ENCODE measurements at regions of chr4 and their contacts with region 1.

Region 1: DNA sequence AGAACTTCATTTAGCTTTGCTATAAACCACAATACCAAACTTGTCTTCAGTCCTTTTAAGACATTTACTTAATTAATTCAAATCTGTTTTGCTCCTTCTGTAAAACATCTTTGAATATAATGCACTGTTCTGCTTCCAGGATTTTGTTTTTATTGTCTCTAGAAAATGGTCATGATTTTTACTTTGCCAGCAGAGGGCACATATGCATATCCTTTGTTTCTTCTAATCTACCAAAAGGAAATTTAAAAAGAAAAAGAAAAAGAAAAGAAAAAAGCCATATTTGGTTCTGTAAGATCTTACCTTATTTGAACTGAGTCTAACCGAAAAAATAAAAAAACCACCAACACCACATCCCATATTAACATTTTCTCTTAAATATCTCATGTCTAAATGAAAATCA is 101.9 kb upstream of the CCSER1 start:
- DNase-seq: no peak
- ATAC-seq: no peak
- H3K4me3 ChIP-seq: no peak overlapping the region
- H3K27ac ChIP-seq: no peak overlapping the region
- H3K4me1 ChIP-seq: peaks cover 9% of the 10 kb centered on the region
- H3K27me3 ChIP-seq: no peaks in the 10 kb centered on the region
- CTCF ChIP-seq: peak in 2 of 3 experiments; percentile 19 to 20; a peak in 3 of 6 replicates
- EP300 ChIP-seq: no peak
- POLR2A ChIP-seq: no peak
- RAD21 ChIP-seq: peak; percentile 46

Region 2: GRCh38 chr4:89929425-89930159 is 95.7 kb before region 1 on chr4:
- CTCF ChIA-PET with region 1: interaction called, 3 read pairs
- POLR2A ChIA-PET with region 1: no interaction called
- RAD21 ChIA-PET with region 1: interaction called, 3 read pairs
- SMC1A ChIA-PET with region 1: interaction called, 5 read pairs
- in situ Hi-C with region 1: no loop called
- intact Hi-C with region 1: loop called (anchors 5 kb)
- DNase-seq: peak; percentile 41
- ATAC-seq: peak; percentile 92
- H3K4me3 ChIP-seq: no peak overlapping the region
- H3K27ac ChIP-seq: no peak overlapping the region
- H3K4me1 ChIP-seq: 0 out of 2 replicates have a peak, but pooled peaks cover 3% of the 10 kb centered on the region
- H3K27me3 ChIP-seq: no peaks in the 10 kb centered on the region
- CTCF ChIP-seq: no peak
- EP300 ChIP-seq: peak in 1 of 2 experiments; percentile 50; a peak in 2 of 4 replicates
- POLR2A ChIP-seq: no peak
- RAD21 ChIP-seq: no peak

Region 3: GRCh38 chr4:89994176-89994873 is 30.9 kb before region 1 on chr4:
- CTCF ChIA-PET with region 1: no interaction called
- POLR2A ChIA-PET with region 1: no interaction called
- RAD21 ChIA-PET with region 1: no interaction called
- SMC1A ChIA-PET with region 1: no interaction called
- in situ Hi-C with region 1: no loop called
- intact Hi-C with region 1: no loop called
- DNase-seq: no peak
- ATAC-seq: no peak
- H3K4me3 ChIP-seq: no peak overlapping the region
- H3K27ac ChIP-seq: no peak overlapping the region
- H3K4me1 ChIP-seq: no peaks in the 10 kb centered on the region
- H3K27me3 ChIP-seq: no peaks in the 10 kb centered on the region
- CTCF ChIP-seq: no peak
- EP300 ChIP-seq: no peak
- POLR2A ChIP-seq: no peak
- RAD21 ChIP-seq: no peak

Region 4: DNA sequence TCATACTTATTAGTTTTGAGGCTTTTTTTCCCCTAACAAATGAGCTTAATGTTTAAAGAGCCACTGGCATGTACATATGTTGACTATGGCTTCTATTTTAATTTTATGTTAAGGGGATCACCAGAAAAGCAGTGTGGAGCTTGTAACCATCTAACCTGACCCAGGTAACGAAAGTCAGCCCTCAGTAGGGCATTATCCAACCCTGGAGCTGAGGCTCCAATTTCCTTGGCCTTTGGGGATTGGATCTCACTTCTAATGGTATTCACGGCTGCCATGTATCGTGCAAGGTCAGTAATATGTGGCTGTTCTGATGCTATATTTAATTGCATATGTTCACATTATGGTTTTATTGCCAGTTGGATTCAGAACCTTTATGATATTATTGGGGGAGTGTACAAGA is 26.8 kb after region 1 on chr4:
- CTCF ChIA-PET with region 1: no interaction called
- POLR2A ChIA-PET with region 1: no interaction called
- RAD21 ChIA-PET with region 1: no interaction called
- SMC1A ChIA-PET with region 1: no interaction called
- in situ Hi-C with region 1: no loop called
- intact Hi-C with region 1: no loop called
- DNase-seq: no peak
- ATAC-seq: no peak
- H3K4me3 ChIP-seq: no peak overlapping the region
- H3K27ac ChIP-seq: no peak overlapping the region
- H3K4me1 ChIP-seq: no peaks in the 10 kb centered on the region
- H3K27me3 ChIP-seq: no peaks in the 10 kb centered on the region
- CTCF ChIP-seq: no peak
- EP300 ChIP-seq: no peak
- POLR2A ChIP-seq: no peak
- RAD21 ChIP-seq: no peak

Region 5: GRCh38 chr4:90127223-90127705 is 102.0 kb after region 1 on chr4 and contains the start of gene CCSER1:
- CTCF ChIA-PET with region 1: no interaction called
- POLR2A ChIA-PET with region 1: no interaction called
- RAD21 ChIA-PET with region 1: no interaction called
- SMC1A ChIA-PET with region 1: no interaction called
- in situ Hi-C with region 1: no loop called
- intact Hi-C with region 1: loop called (anchors 5 kb)
- DNase-seq: no peak
- ATAC-seq: peak; percentile 78
- H3K4me3 ChIP-seq: peak within 1 kb of the TSS; percentile 81
- H3K27ac ChIP-seq: peak within 1 kb of the TSS; percentile 68
- H3K4me1 ChIP-seq: peaks cover 6% of the 10 kb centered on the region
- H3K27me3 ChIP-seq: peaks cover 0 to 2% of the 10 kb centered on the region in 2 experiments; a peak in 2 of 4 replicates
- CTCF ChIP-seq: no peak
- EP300 ChIP-seq: no peak
- POLR2A ChIP-seq: peak; percentile 98
- RAD21 ChIP-seq: no peak
- polyA plus RNA-seq, gene CCSER1: 0.22 to 0.26 TPM

Region 6: GRCh38 chr4:90165883-90166282 is 140.6 kb after region 1 on chr4:
- CTCF ChIA-PET with region 1: no interaction called
- POLR2A ChIA-PET with region 1: no interaction called
- RAD21 ChIA-PET with region 1: no interaction called
- SMC1A ChIA-PET with region 1: interaction called, 3 read pairs
- in situ Hi-C with region 1: no loop called
- intact Hi-C with region 1: loop called (anchors 5 kb)
- DNase-seq: peak; percentile 25
- ATAC-seq: peak; percentile 91
- H3K4me3 ChIP-seq: no peak overlapping the region
- H3K27ac ChIP-seq: no peak overlapping the region
- H3K4me1 ChIP-seq: peaks cover 3% of the 10 kb centered on the region; the same call in 1 of the 2 replicates
- H3K27me3 ChIP-seq: no peaks in the 10 kb centered on the region
- CTCF ChIP-seq: no peak
- EP300 ChIP-seq: peak; percentile 48 to 85; a peak in 2 of 4 replicates
- POLR2A ChIP-seq: no peak
- RAD21 ChIP-seq: no peak